Heart right ventricle (tissue), 16 donors: ENCODE measurements at regions of chr15 and their contacts with region 1.

Region 1: DNA sequence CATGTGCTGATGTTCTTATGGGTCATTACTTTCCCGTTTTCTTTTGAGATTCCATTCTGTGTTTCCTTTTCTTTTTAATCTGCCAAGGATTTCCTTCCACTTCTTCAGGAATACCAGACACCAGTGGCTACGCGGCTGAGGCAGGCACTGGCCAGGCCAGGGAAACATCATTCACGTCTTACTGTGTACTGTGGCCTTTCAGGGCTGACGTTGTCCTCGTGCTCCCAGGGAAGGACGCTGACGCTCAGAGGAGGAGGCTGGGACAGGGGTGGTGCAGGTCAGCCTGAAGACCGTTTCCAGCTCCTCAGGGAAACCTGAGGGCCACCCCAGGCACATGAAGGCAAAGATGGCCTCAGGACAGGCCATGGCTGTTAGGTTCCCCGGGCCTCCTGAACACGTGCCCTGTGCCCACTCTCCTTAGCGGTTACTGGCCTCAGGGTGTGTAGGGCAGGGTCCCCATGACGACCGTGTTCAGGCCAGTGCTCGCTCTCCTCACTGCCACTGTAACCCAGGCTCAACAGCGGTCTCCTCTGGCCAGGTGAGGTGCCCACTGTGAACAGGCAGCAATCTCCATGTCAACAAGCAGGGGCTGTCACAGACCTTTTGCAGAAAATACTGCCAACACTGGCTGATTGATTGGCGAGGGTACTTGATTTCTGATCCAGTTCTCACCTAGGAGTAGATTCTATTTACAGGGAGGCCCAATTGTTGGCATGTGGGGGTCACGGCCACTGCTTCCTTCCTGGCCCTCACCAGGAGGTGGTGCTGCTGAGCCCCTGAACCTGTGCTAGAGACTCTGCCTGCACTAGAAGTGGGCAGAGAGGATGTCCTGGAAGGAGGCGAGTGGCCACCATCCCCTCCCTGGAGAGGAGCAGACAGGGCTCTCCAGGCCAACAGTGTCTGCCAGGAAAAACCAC is 169.5 kb downstream of the ATP10A start:
- DNase-seq: peak in 1 of 2 donors; percentile 54
- ATAC-seq: peak in 7 of 8 donors; percentile 50 to 66 (median 61)
- H3K4me3 ChIP-seq: no peak overlapping the region
- H3K27ac ChIP-seq: no peak overlapping the region
- H3K4me1 ChIP-seq: peaks cover 0 to 14% (median 3%) of the 10 kb centered on the region in 9 donors
- H3K27me3 ChIP-seq: no peaks in the 10 kb centered on the region
- CTCF ChIP-seq: peak; percentile 17 to 68 (median 62)

Region 2: DNA sequence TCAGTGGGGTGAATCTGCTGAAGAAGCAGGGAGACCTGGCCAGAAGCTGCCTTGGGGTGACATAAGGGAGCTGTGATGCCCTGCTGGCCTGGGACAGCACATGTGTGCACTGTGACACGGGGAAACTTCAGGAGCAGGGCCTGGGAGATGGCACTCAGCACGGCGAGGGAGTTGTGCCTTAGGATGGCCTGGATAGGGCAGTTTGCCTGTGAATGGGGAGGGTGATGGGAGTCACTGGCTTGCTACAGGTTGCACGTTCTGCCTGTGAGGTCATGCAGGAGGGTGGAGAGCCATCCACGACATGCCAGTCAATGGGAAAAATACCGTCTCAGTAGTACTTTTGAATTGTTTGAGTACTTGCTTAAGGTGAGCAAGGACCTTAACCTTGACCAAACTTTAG is 177.9 kb before region 1 on chr15:
- intact Hi-C with region 1: loop called in 4 of 10 experiments (anchors 5 to 10 kb)
- DNase-seq: no peak
- ATAC-seq: no peak
- H3K4me3 ChIP-seq: no peak overlapping the region
- H3K27ac ChIP-seq: no peak overlapping the region
- H3K4me1 ChIP-seq: no peaks in the 10 kb centered on the region
- H3K27me3 ChIP-seq: no peaks in the 10 kb centered on the region
- CTCF ChIP-seq: no peak

Region 3: DNA sequence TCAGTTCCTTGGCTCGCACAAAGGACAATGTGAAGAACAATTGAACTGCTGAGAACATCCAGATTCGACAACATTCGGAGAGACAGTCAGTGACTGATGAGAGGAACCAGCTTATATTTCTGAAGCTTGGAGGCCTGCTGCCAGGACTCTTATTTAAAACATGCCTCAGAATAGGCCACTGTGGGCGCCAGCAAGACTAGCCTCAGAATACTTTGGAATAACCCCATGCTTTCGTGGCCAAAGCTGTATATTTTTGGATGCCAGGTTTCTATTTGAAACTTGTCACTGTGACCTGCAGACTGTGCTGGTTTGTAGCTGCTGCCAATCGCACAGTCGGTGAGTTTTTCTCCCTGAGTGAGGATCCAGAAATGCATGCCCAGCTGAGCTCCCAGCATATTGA is 124.8 kb before region 1 on chr15:
- intact Hi-C with region 1: loop called in 2 of 10 experiments (anchors 5 kb)
- DNase-seq: peak; percentile 30 to 33
- ATAC-seq: peak; percentile 61 to 93 (median 78)
- H3K4me3 ChIP-seq: no peak overlapping the region
- H3K27ac ChIP-seq: peak overlapping the region in 5 of 10 donors; percentile 51 to 72 (median 57)
- H3K4me1 ChIP-seq: peaks cover 0 to 47% (median 13%) of the 10 kb centered on the region in 9 donors
- H3K27me3 ChIP-seq: no peaks in the 10 kb centered on the region
- CTCF ChIP-seq: no peak

Region 4: GRCh38 chr15:25850154-25851111 is 156.9 kb after region 1 on chr15:
- intact Hi-C with region 1: no loop called
- DNase-seq: peak; percentile 77 to 79
- ATAC-seq: peak; percentile 84 to 95 (median 89)
- H3K4me3 ChIP-seq: peak overlapping the region in 9 of 10 donors; percentile 23 to 53 (median 46)
- H3K27ac ChIP-seq: peak overlapping the region; percentile 40 to 86 (median 75)
- H3K4me1 ChIP-seq: peaks cover 0 to 50% (median 15%) of the 10 kb centered on the region in 9 donors
- H3K27me3 ChIP-seq: peaks cover 0 to 4% (median 0%) of the 10 kb centered on the region in 7 donors
- CTCF ChIP-seq: no peak

Region 5: DNA sequence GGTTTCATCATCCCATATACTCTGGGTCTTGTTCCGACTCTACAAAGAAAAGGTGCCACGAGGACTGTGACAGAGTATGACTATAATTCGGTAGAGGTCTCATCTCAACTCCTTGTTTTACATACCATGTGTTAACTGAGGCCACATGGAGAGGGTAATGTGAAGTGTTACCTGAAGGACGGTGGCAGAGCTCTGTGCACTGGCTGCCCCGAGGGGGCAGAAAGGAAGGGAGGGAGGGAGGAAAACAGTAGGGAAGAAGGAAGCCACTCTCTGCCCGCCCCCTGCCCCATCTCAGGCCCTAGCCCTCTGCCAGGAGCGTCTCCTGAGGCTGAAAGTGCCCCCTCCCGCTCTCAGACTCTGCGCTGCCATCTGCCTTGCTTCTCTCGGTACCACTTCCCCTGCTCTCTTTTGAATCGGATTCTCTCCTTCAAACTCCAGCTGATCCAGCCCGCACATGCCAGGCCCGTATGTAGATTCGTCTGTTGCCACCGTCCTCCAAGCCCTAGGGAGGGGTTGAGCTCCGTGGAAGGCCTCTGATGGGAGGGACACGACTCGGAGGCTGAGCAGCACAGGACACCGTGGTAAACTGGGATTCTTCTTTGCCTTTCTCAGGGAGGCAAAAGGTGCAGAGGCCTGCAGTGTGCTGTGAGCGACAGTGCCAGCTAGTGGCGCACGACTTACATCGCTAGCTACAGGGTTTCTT is 240.0 kb after region 1 on chr15:
- intact Hi-C with region 1: loop called in 6 of 10 experiments (anchors 2 to 10 kb)
- DNase-seq: peak; percentile 51 to 70
- ATAC-seq: peak; percentile 81 to 94 (median 88)
- H3K4me3 ChIP-seq: peak overlapping the region in 7 of 10 donors; percentile 7 to 31 (median 23)
- H3K27ac ChIP-seq: no peak overlapping the region
- H3K4me1 ChIP-seq: peaks cover 0 to 7% (median 0%) of the 10 kb centered on the region in 9 donors
- H3K27me3 ChIP-seq: peaks cover 0 to 7% (median 0%) of the 10 kb centered on the region in 7 donors
- CTCF ChIP-seq: peak; percentile 44 to 74 (median 66)